Endothelial cell of umbilical vein (primary cell): ENCODE measurements at regions of chr4 and their contacts with region 1.

Region 1: GRCh38 chr4:5399790-5400421 is 308.5 kb downstream of the EVC2 start:
- DNase-seq: peak; percentile 25
- H3K4me3 ChIP-seq: no peak overlapping the region
- H3K27ac ChIP-seq: no peak overlapping the region
- H3K4me1 ChIP-seq: no peaks in the 10 kb centered on the region
- H3K27me3 ChIP-seq: no peaks in the 10 kb centered on the region
- CTCF ChIP-seq: peak; percentile 74 to 82
- POLR2A ChIP-seq: no peak

Region 2: DNA sequence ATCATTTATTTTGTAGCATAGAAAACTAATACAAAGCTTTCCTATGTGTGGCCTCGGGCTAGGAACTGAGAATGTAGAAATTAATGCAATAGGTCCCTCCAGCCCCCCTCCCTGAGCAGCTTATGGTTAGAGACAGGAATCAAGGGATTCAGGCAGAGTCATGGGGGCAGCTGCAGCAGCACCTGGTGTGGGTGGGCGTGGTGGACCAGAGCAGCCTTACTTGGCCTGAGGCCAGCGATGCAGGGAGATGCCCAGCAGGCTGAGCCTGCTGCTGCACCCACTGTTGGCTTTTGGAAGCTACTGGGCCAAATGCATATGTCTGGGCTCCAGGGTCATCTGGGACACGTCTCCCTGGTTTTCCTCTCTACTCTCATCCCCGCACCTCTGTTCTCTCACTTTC is 274.6 kb before region 1 on chr4:
- CTCF ChIA-PET with region 1: no interaction called
- POLR2A ChIA-PET with region 1: no interaction called
- dilution Hi-C with region 1: no loop called
- intact Hi-C with region 1: no loop called
- DNase-seq: no peak
- H3K4me3 ChIP-seq: no peak overlapping the region
- H3K27ac ChIP-seq: no peak overlapping the region
- H3K4me1 ChIP-seq: no peaks in the 10 kb centered on the region
- H3K27me3 ChIP-seq: no peaks in the 10 kb centered on the region
- CTCF ChIP-seq: no peak
- POLR2A ChIP-seq: no peak

Region 3: GRCh38 chr4:5249727-5250126 is 150.2 kb before region 1 on chr4:
- CTCF ChIA-PET with region 1: no interaction called
- POLR2A ChIA-PET with region 1: no interaction called
- dilution Hi-C with region 1: no loop called
- intact Hi-C with region 1: no loop called
- DNase-seq: no peak
- H3K4me3 ChIP-seq: no peak overlapping the region
- H3K27ac ChIP-seq: no peak overlapping the region
- H3K4me1 ChIP-seq: no peaks in the 10 kb centered on the region
- H3K27me3 ChIP-seq: no peaks in the 10 kb centered on the region
- CTCF ChIP-seq: no peak
- POLR2A ChIP-seq: no peak

Region 4: DNA sequence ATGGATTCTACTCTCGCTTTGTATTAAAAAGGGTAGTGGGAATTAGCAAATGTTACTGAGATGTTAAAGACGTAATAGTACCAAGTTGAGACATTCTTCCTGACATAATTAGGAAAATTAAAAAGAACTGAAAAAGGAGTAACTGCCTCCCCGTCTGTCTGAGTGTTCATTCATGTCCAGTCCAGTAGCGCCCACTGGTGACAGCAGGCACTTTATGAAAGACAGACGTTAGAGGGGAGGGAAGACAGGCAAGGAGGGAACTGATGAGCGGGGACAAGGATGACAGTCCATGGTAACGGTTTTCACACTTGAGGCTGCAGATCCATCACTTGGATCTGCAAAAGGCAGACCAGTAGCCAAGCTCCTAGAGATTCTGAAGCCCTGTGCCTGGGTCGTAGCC is 21.9 kb before region 1 on chr4:
- CTCF ChIA-PET with region 1: interaction called, 15 read pairs
- POLR2A ChIA-PET with region 1: no interaction called
- dilution Hi-C with region 1: no loop called
- intact Hi-C with region 1: no loop called
- DNase-seq: no peak
- H3K4me3 ChIP-seq: no peak overlapping the region
- H3K27ac ChIP-seq: no peak overlapping the region
- H3K4me1 ChIP-seq: no peaks in the 10 kb centered on the region
- H3K27me3 ChIP-seq: no peaks in the 10 kb centered on the region
- CTCF ChIP-seq: no peak
- POLR2A ChIP-seq: no peak

Region 5: DNA sequence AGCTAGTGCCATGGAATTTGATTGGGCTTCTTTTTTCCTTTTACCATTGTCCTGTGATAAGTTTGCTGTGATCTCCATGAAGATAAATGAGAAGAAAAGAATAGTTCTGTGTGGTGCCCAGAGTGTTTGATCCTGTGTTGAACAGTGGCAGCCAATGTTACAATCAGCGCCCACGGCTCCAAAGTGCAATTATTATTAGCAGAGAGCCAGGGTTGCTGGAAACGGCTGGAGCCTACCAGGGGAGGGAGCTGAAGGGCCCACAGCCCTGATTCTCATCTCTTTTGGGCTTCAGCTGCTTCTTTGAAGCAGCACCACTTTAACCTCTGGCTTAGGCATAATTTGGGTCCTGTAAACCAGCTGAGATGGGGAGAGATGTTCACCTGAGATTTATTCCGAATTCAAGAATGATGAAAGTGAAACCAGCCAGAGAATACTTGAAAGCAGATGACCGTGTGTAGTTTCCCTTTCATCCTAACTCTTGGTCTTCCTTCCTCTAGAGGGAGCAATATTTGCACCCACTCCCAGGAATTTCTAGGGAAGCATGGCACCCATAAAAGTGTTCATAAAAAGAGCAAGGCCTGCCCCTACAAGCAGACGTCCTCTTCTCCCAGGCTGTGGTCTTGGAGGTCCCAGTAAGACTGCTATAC is 10.2 kb after region 1 on chr4:
- CTCF ChIA-PET with region 1: interaction called, 23 read pairs
- POLR2A ChIA-PET with region 1: no interaction called
- dilution Hi-C with region 1: no loop called
- intact Hi-C with region 1: no loop called
- DNase-seq: no peak
- H3K4me3 ChIP-seq: no peak overlapping the region
- H3K27ac ChIP-seq: no peak overlapping the region
- H3K4me1 ChIP-seq: no peaks in the 10 kb centered on the region
- H3K27me3 ChIP-seq: no peaks in the 10 kb centered on the region
- CTCF ChIP-seq: no peak
- POLR2A ChIP-seq: no peak

Region 6: GRCh38 chr4:5791654-5792053 is 391.7 kb after region 1 on chr4:
- CTCF ChIA-PET with region 1: interaction called, 7 read pairs
- POLR2A ChIA-PET with region 1: no interaction called
- dilution Hi-C with region 1: no loop called
- intact Hi-C with region 1: loop called (anchors 1 kb)
- DNase-seq: no peak
- H3K4me3 ChIP-seq: no peak overlapping the region
- H3K27ac ChIP-seq: no peak overlapping the region
- H3K4me1 ChIP-seq: no peaks in the 10 kb centered on the region
- H3K27me3 ChIP-seq: no peaks in the 10 kb centered on the region
- CTCF ChIP-seq: no peak
- POLR2A ChIP-seq: no peak